ENCODE measurements at regions of chr11 and their contacts with region 1.

Region 1: GRCh38 chr11:94342250-94342649 is 37.9 kb downstream of the IZUMO1R start:
- DNase-seq: no peak
- H3K4me3 ChIP-seq: no peak overlapping the region
- H3K27ac ChIP-seq: no peak overlapping the region
- H3K4me1 ChIP-seq: no peaks in the 10 kb centered on the region
- H3K27me3 ChIP-seq: peaks cover 16% of the 10 kb centered on the region
- CTCF ChIP-seq: no peak

Region 2: DNA sequence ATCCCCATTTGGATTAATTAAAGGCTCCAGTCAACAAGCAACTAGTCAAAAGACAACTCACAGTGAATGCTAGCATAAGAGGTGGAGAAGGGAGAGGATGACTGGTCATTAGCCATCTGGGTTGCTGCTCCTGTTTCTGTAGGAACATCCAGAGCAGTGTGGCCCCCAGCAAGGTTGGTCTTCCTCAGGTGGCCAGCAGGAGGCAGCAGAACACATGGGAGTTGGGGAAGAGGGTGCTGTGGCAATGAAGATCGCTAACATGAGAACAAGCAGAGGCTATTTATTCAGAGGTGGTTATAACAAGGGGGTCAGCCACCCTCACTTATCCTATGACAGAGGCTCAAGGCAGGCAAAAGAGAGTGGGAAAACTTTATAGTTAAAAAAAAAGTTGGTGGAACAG is 16.6 kb before region 1 on chr11:
- CTCF ChIA-PET with region 1: interaction called, 14 read pairs
- POLR2A ChIA-PET with region 1: no interaction called
- intact Hi-C with region 1: no loop called
- DNase-seq: peak; percentile 64
- H3K4me3 ChIP-seq: no peak overlapping the region
- H3K27ac ChIP-seq: no peak overlapping the region
- H3K4me1 ChIP-seq: no peaks in the 10 kb centered on the region
- H3K27me3 ChIP-seq: peaks cover 10% of the 10 kb centered on the region
- CTCF ChIP-seq: peak; percentile 76